Activated CD4-positive, alpha-beta T cell treated with anti-CD3 and anti-CD28 coated beads for 36 hours (primary cell): ENCODE measurements at regions of chrX and their contacts with region 1.

Region 1: DNA sequence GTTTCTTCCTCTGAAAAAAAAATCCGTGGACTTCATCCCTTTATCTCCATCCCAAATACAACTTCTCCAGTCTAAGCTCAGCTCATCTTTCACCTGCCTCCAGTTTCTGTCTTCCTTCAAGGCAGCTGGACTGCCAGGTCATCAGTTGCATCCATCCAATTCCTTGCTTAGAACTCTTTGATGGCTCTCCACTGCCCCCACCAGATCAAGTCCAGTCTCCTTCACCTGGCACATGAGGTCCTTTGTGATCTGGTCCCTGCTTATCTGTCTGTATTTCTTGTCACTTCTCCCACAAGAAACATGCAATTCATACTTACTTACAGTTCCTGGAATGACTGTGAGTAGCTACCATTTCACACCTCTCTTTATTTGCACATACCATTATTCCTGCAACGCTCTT is 33.8 kb downstream of the OTUD6A start:
- DNase-seq: no peak
- ATAC-seq: no peak
- H3K4me3 Mint-ChIP-seq: no peak overlapping the region
- H3K27ac Mint-ChIP-seq: no peak overlapping the region
- H3K4me1 Mint-ChIP-seq: no peaks in the 10 kb centered on the region
- H3K27me3 Mint-ChIP-seq: peaks cover 5% of the 10 kb centered on the region

Region 2: DNA sequence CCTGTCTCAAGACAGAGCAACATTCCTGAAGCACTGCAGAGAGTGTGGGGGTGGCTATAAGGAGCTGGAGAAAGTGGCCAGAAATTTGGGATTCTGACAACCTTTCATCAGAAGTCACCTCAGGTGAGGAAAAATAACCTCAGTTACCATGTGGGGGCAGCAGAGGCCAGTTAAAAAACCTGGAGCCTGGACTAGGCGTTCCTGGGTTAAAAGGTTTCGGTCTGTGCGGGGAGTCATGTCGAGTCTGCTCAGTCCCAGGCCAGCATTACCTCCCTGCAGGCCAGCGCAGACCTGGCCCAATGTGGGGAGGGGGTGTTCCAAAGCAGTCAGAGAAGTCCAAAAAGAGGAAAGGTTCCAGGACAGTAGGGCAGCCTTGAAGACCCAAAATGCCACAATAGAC is 602.9 kb before region 1 on chrX:
- CTCF ChIA-PET with region 1: interaction called, 7 read pairs
- POLR2A ChIA-PET with region 1: no interaction called
- intact Hi-C with region 1: loop called in 1 of 2 experiments (anchors 5 kb)
- DNase-seq: peak; percentile 48
- ATAC-seq: peak; percentile 42
- H3K4me3 Mint-ChIP-seq: no peak overlapping the region
- H3K27ac Mint-ChIP-seq: no peak overlapping the region
- H3K4me1 Mint-ChIP-seq: no peaks in the 10 kb centered on the region
- H3K27me3 Mint-ChIP-seq: peaks cover 11% of the 10 kb centered on the region

Region 3: DNA sequence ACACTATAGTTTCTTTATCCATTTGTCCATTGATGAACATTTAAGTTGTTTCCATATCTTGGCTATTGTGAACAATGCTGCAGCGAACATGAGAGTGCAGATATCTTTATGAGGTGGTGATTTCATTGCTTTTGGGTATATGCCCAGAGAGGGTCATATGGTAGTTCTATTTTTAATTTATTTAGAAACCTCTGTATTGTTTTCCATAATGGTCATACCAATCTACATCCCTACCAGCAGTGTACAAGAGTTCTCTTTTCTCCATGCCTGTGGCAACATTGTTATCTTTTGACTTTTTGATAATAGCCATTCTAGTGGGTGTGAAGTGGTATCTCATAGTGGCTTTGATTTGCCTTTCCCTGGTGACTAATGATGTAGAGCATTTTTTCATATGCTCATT is 431.4 kb before region 1 on chrX:
- CTCF ChIA-PET with region 1: no interaction called
- POLR2A ChIA-PET with region 1: no interaction called
- intact Hi-C with region 1: no loop called
- DNase-seq: no peak
- ATAC-seq: no peak
- H3K4me3 Mint-ChIP-seq: no peak overlapping the region
- H3K27ac Mint-ChIP-seq: no peak overlapping the region
- H3K4me1 Mint-ChIP-seq: no peaks in the 10 kb centered on the region
- H3K27me3 Mint-ChIP-seq: no peaks in the 10 kb centered on the region

Region 4: GRCh38 chrX:69844636-69845035 is 251.4 kb before region 1 on chrX:
- CTCF ChIA-PET with region 1: no interaction called
- POLR2A ChIA-PET with region 1: no interaction called
- intact Hi-C with region 1: no loop called
- DNase-seq: no peak
- ATAC-seq: no peak
- H3K4me3 Mint-ChIP-seq: no peak overlapping the region
- H3K27ac Mint-ChIP-seq: no peak overlapping the region
- H3K4me1 Mint-ChIP-seq: no peaks in the 10 kb centered on the region
- H3K27me3 Mint-ChIP-seq: no peaks in the 10 kb centered on the region